A549 (cell line): ENCODE measurements at regions of chr11 and their contacts with region 1.

Region 1: DNA sequence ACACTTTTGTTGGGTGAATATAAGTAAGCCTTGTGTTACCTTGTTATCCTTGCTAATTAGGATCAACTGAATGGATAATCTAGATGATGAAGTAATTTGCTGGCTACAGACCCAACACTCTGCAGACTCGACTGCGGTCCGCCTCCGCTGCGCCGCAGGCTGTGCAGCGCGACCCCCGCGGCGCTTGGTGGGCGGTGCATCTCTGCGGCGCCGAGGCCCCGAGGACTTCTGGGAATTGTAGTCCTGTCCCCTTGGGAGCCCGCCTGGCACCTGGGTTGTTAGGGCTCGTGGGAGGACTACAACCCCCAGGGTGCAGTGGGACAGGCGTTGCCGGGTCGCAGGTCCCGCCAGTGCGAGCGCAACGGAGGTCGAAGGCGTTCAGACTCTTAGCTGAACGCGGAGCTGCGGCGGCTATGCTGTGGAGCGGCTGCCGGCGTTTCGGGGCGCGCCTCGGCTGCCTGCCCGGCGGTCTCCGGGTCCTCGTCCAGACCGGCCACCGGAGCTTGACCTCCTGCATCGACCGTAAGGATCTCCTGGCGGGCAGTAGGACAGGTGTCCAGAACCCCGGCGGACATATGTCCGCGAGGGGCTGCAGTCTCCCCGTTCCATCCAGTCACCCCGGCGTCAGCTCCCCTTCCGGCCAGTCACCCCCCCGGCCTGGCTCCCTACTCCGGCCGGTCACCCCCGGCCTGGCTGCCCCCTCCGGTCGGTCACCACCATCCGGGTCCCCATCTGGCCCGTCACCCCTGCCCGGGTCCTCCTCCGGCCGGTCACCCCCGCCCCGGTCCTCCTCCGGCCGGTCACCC is at the starts of genes ACAD8 and THYN1:
- DNase-seq: peak; percentile 86 to 90
- ATAC-seq: peak; percentile 99 to 100
- H3K4me3 ChIP-seq: peak within 1 kb of the TSS; percentile 55
- H3K27ac ChIP-seq: peak within 1 kb of the TSS; percentile 78 to 89
- H3K4me1 ChIP-seq: peaks cover 13% of the 10 kb centered on the region
- CTCF ChIP-seq: no peak
- EP300 ChIP-seq: no peak
- POLR2A ChIP-seq: peak; percentile 78
- RAD21 ChIP-seq: no peak
- polyA plus RNA-seq, gene ACAD8: 16.8 and 16.9 TPM in 2 replicates
- polyA plus RNA-seq, gene THYN1: 27.9 and 32.7 TPM in 2 replicates

Region 2: GRCh38 chr11:134098566-134099184 is 154.7 kb before region 1 on chr11:
- CTCF ChIA-PET with region 1: no interaction called
- POLR2A ChIA-PET with region 1: no interaction called
- DNase-seq: peak in 1 of 2 experiments; percentile 19
- ATAC-seq: peak; percentile 65 to 68; a peak in 4 of 6 replicates
- H3K4me3 ChIP-seq: no peak overlapping the region
- H3K27ac ChIP-seq: no peak overlapping the region
- H3K4me1 ChIP-seq: no peaks in the 10 kb centered on the region
- CTCF ChIP-seq: no peak; the same call in 2 of the 3 replicates
- EP300 ChIP-seq: no peak
- POLR2A ChIP-seq: no peak
- RAD21 ChIP-seq: 0 out of 5 replicates have a peak, but pooled peaks of 1 of the 2 experiments have one; percentile 8

Region 3: GRCh38 chr11:134139873-134140331 is 113.5 kb before region 1 on chr11:
- CTCF ChIA-PET with region 1: no interaction called
- POLR2A ChIA-PET with region 1: no interaction called
- DNase-seq: peak; percentile 8 to 54
- ATAC-seq: peak; percentile 77 to 88
- H3K4me3 ChIP-seq: no peak overlapping the region
- H3K27ac ChIP-seq: no peak overlapping the region
- H3K4me1 ChIP-seq: no peaks in the 10 kb centered on the region
- CTCF ChIP-seq: peak; percentile 38
- EP300 ChIP-seq: no peak
- POLR2A ChIP-seq: no peak
- RAD21 ChIP-seq: peak; percentile 34 to 60; a peak in 3 of 5 replicates

Region 4: DNA sequence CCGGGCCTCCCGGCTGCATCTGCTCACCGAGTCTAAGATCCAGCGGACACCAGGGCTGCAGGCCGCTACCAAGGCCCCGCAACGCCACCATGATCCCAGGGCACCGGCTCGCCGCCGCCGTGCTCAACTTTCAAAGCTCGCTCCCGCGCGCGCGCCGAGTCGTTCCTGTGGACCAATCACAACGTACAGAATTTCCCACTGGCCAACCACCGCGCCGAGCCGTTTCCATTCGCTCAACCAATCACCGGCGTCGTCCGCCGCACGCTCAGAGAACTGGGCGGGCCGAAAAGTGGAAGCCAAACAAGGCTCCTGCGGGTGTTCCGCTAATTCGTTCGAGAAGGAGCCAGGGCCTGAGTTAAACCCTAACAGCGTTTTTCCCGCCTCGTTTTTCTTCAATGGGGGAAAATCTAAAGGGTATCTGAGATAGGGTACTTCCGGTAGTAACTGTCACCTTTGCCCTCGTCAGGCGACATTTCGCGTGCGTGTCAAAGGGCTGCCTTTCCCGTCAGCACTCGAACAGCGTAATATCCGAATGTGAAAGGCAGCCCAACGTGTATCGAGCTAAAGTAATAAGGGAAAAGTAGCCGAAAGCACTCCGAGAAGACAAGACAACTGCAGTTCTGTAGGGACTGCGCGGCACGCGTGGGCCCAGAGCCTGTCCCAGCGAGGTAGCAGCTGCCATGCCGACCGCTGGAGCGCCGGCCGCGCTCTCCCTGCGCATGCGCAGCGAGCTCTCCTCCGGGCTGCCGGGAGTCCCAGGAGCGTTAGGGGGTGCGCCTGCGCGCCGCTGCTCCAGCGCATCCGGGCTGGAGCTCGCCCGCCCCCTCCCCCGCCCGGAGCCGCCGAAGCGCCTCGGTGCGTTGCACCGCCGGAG is 29.3 kb before region 1 on chr11 and contains the starts of genes NCAPD3 and VPS26B:
- CTCF ChIA-PET with region 1: no interaction called
- POLR2A ChIA-PET with region 1: interaction called, 19 read pairs
- DNase-seq: peak; percentile 81 to 94
- ATAC-seq: peak; percentile 91 to 97
- H3K4me3 ChIP-seq: peak within 1 kb of the TSS; percentile 60
- H3K27ac ChIP-seq: peak within 1 kb of the TSS; percentile 85 to 90
- H3K4me1 ChIP-seq: peaks cover 17% of the 10 kb centered on the region; the same call in 1 of the 3 replicates
- CTCF ChIP-seq: no peak
- EP300 ChIP-seq: no peak
- POLR2A ChIP-seq: peak; percentile 90
- RAD21 ChIP-seq: no peak
- polyA plus RNA-seq, gene NCAPD3: 35.8 and 36.0 TPM in 2 replicates
- polyA plus RNA-seq, gene VPS26B: 25.7 and 26.3 TPM in 2 replicates

Region 5: DNA sequence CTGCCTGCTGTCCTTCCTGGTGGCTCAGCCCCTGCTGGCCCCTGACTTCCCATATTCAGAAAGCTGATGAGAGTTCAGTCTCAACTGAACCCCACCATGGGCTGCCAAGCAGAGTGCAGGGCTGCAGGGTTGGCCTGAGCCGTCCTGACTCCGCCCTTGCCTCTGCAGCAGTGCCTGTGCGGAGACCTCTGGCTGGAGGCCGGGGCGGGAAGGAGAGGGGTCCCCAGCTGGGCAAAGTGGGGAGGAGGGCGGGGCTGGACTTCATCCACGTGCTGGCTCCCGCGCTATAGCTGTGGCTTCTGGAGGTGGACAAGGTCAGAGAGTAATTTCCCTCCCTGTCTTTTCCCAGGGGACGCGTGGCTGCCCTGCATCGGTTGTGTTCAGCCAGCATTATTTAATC is 36.4 kb after region 1 on chr11:
- CTCF ChIA-PET with region 1: no interaction called
- POLR2A ChIA-PET with region 1: no interaction called
- DNase-seq: no peak
- ATAC-seq: no peak
- H3K4me3 ChIP-seq: no peak overlapping the region
- H3K27ac ChIP-seq: no peak overlapping the region
- H3K4me1 ChIP-seq: no peaks in the 10 kb centered on the region
- CTCF ChIP-seq: no peak
- EP300 ChIP-seq: no peak
- POLR2A ChIP-seq: no peak
- RAD21 ChIP-seq: no peak